Activated CD8-positive, alpha-beta T cell treated with anti-CD3 and anti-CD28 coated beads for 36 hours (primary cell): ENCODE measurements at regions of chr1 and their contacts with region 1.

Region 1: DNA sequence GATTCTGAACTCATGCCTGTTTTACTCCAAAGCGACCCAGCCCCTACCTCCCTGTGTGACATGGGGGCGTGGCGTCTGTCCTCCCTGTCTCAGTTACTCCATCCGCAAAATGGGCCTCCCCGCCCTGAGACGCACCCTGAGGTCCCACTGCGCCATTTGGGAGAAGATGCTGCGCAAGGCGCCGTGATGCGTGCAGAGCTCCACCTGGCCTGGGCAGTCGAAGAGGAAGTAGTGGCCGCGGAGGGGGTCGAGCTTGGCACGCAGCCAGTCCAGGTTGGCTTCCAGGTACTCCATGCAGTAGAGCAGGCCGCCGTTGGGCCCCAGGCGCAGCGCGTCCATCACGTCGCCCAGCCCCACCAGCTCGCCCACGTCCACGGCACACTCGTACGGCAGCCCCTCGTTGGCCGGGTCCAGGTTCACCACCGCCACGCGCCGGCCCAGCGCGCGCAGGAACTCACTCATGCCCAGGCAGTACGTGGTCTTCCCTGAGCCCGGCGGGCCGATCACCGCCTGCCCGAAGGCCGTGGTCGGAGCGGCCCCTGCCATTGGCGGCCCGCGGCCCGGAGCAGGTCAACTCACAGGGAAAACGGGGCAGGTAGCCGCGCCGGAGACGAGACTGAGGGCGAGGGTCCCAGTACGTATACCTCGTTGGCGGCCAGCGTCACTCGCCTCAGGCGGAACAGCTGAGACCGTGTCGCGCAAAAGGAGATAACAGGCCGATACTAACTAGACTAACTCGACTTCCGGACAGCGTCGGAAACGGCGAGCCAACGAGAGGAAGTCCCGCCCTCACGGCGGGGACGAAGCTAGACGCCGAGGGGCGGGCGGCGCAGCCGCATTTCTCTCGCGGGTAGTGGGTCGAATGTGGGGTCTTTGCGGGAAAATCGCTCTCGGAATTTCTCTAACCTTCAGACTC is at the start of gene GPN2:
- DNase-seq: peak; percentile 85
- ATAC-seq: peak; percentile 97
- H3K4me3 Mint-ChIP-seq: peak within 1 kb of the TSS; percentile 97
- H3K27ac Mint-ChIP-seq: peak within 1 kb of the TSS; percentile 94
- H3K4me1 Mint-ChIP-seq: peaks cover 29% of the 10 kb centered on the region
- H3K27me3 Mint-ChIP-seq: no peaks in the 10 kb centered on the region
- CTCF ChIP-seq: no peak
- total RNA-seq, gene GPN2: 45.9 to 47.9 TPM

Region 2: DNA sequence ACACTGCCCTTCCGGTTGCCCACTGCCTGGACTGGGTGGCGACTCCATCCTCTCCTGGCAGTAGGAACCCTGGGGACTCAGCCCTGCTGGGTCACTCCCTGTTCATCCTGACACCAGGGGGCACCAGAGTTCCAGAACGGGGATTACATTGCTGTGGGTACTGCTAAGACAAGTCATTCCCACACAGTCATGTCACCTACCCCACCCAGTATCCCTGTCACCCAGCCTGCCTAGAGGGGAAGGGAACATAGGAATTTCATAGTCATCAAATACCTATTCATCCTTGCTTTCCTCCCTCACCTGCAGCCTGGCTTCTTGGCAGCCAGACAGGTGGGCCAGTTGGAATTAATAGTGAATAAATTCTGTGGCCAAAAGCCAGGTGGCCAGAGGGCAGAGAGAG is 36.7 kb before region 1 on chr1:
- CTCF ChIA-PET with region 1: no interaction called
- POLR2A ChIA-PET with region 1: interaction called, 3 read pairs
- intact Hi-C with region 1: loop called (anchors 5 kb)
- DNase-seq: peak; percentile 82
- ATAC-seq: peak; percentile 72
- H3K4me3 Mint-ChIP-seq: no peak overlapping the region
- H3K27ac Mint-ChIP-seq: no peak overlapping the region
- H3K4me1 Mint-ChIP-seq: no peaks in the 10 kb centered on the region
- H3K27me3 Mint-ChIP-seq: no peaks in the 10 kb centered on the region
- CTCF ChIP-seq: peak; percentile 76

Region 3: DNA sequence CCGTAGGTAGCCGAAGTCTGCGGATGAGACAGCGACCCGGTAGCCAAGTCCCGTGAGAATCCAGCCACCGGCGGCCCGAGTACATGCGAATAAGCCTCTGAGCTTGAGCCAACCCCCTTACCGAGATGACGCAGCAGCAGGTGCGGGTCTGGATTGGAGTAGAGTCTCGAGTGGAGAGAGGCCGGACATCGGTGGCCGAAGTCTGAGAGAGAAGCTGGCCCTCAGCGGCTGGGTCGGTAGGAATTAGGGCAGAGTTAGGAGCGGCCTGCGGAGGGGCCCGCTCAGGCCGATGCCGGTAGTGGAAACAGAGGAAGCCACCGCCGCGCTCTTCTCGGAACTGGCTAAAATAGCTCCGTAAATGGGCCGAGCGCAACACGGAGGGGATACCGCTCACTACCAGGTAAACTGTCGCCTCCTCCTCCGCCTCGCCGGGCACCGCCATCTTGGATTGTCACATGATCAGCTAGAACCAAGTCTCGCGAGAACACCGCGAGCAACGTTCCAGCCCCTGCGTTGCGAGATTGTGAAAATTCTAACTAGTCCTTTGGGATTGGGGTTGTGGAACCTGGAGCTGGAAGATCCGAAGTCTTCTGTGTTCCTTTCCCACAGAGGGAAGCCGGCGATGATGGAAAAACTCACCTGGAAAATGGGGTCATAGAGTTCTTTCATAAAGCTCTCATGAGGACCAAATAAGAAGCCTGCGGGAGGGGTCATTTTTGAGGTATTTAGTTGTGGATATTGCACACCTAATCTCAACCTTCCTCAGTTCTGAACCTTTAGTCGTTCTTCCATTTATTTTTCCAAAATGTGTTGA is 10.4 kb after region 1 on chr1 and contains the start of gene GPATCH3:
- CTCF ChIA-PET with region 1: interaction called, 11 read pairs
- POLR2A ChIA-PET with region 1: interaction called, 91 read pairs
- intact Hi-C with region 1: loop called (anchors 2 kb)
- DNase-seq: peak; percentile 95
- ATAC-seq: peak; percentile 95
- H3K4me3 Mint-ChIP-seq: peak within 1 kb of the TSS; percentile 93
- H3K27ac Mint-ChIP-seq: peak within 1 kb of the TSS; percentile 100
- H3K4me1 Mint-ChIP-seq: peaks cover 34% of the 10 kb centered on the region
- H3K27me3 Mint-ChIP-seq: no peaks in the 10 kb centered on the region
- CTCF ChIP-seq: no peak
- total RNA-seq, gene GPATCH3: 8.7 to 9.6 TPM

Region 4: GRCh38 chr1:26921540-26922430 is 32.0 kb after region 1 on chr1 and contains the start of gene NUDC:
- CTCF ChIA-PET with region 1: interaction called, 3 read pairs
- POLR2A ChIA-PET with region 1: interaction called, 11 read pairs
- intact Hi-C with region 1: no loop called
- DNase-seq: peak; percentile 98
- ATAC-seq: peak; percentile 96
- H3K4me3 Mint-ChIP-seq: peak within 1 kb of the TSS; percentile 93
- H3K27ac Mint-ChIP-seq: peak within 1 kb of the TSS; percentile 98
- H3K4me1 Mint-ChIP-seq: peaks cover 39% of the 10 kb centered on the region
- H3K27me3 Mint-ChIP-seq: no peaks in the 10 kb centered on the region
- CTCF ChIP-seq: no peak
- total RNA-seq, gene NUDC: 97.0 to 103 TPM

Region 5: GRCh38 chr1:26959722-26960615 is 70.2 kb after region 1 on chr1 and contains the start of gene KDF1:
- CTCF ChIA-PET with region 1: no interaction called
- POLR2A ChIA-PET with region 1: no interaction called
- intact Hi-C with region 1: no loop called
- DNase-seq: peak; percentile 37
- ATAC-seq: peak; percentile 77
- H3K4me3 Mint-ChIP-seq: peak within 1 kb of the TSS; percentile 70
- H3K27ac Mint-ChIP-seq: no peak within 1 kb of the TSS
- H3K4me1 Mint-ChIP-seq: peaks cover 3% of the 10 kb centered on the region
- H3K27me3 Mint-ChIP-seq: peaks cover 25% of the 10 kb centered on the region
- CTCF ChIP-seq: peak; percentile 15
- total RNA-seq, gene KDF1: 0.18 to 0.27 TPM

Region 6: DNA sequence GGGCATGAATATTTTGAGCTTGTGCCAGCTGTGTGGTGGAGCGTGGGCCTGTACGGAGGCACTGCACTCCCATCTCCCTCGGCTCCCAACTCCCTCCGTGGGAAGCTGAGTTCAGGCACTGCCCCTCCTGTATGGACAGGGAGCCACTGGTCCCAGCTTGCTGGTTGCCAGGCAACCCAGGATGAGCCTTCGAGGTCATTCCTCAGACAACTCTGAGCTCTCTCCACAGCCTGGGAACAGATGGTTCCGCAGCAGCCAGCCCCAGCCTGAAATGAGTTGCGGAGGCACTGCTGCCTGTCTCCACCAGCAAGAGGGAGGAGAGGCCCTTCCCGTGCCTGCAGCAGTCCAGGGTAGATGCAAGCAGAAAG is 181.2 kb after region 1 on chr1:
- CTCF ChIA-PET with region 1: no interaction called
- POLR2A ChIA-PET with region 1: no interaction called
- intact Hi-C with region 1: no loop called
- DNase-seq: no peak
- ATAC-seq: no peak
- H3K4me3 Mint-ChIP-seq: no peak overlapping the region
- H3K27ac Mint-ChIP-seq: no peak overlapping the region
- H3K4me1 Mint-ChIP-seq: no peaks in the 10 kb centered on the region
- H3K27me3 Mint-ChIP-seq: no peaks in the 10 kb centered on the region
- CTCF ChIP-seq: no peak